T-cell (primary cell): ENCODE measurements at regions of chrX and their contacts with region 1.

Region 1: DNA sequence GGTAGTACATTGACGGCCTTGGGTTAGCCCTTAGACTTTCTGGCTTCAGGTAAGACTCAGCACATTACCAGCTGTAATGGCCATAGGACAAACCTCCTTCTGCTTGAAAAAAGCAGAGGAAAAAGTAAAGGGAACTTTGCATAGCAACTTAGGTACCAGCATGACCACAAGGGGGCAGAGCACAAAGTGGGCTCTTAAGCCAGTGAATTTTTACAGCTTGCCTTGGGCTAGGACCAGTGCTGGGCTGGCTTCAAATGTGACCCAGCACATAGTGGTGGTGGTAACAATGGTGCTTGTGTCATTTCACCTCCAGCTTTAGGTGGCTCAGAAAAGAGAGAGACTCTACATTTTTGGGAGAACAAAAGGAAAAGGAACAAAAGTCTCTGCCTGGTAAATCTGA is 66.1 kb downstream of the KLHL4 start:
- DNase-seq: peak in 1 of 35 experiments; percentile 1
- ATAC-seq: no peak
- H3K4me3 ChIP-seq: no peak overlapping the region
- H3K4me3 Mint-ChIP-seq: no peak overlapping the region
- H3K27ac ChIP-seq: no peak overlapping the region
- H3K27ac Mint-ChIP-seq: no peak overlapping the region
- H3K4me1 ChIP-seq: no peaks in the 10 kb centered on the region
- H3K4me1 Mint-ChIP-seq: no peaks in the 10 kb centered on the region
- H3K27me3 ChIP-seq: no peaks in the 10 kb centered on the region
- H3K27me3 Mint-ChIP-seq: no peaks in the 10 kb centered on the region

Region 2: GRCh38 chrX:87489071-87489470 is 94.6 kb before region 1 on chrX:
- CTCF ChIA-PET with region 1: no interaction called
- POLR2A ChIA-PET with region 1: no interaction called
- DNase-seq: no peak
- ATAC-seq: no peak
- H3K4me3 ChIP-seq: no peak overlapping the region
- H3K4me3 Mint-ChIP-seq: no peak overlapping the region
- H3K27ac ChIP-seq: no peak overlapping the region
- H3K27ac Mint-ChIP-seq: no peak overlapping the region
- H3K4me1 ChIP-seq: no peaks in the 10 kb centered on the region
- H3K4me1 Mint-ChIP-seq: no peaks in the 10 kb centered on the region
- H3K27me3 ChIP-seq: no peaks in the 10 kb centered on the region
- H3K27me3 Mint-ChIP-seq: peaks cover 0 to 3% of the 10 kb centered on the region in 2 donors

Region 3: GRCh38 chrX:87572911-87573310 is 10.8 kb before region 1 on chrX:
- CTCF ChIA-PET with region 1: no interaction called
- POLR2A ChIA-PET with region 1: interaction called in 1 of 2 experiments, 12 read pairs
- DNase-seq: no peak
- ATAC-seq: no peak
- H3K4me3 ChIP-seq: no peak overlapping the region
- H3K4me3 Mint-ChIP-seq: no peak overlapping the region
- H3K27ac ChIP-seq: no peak overlapping the region
- H3K27ac Mint-ChIP-seq: no peak overlapping the region
- H3K4me1 ChIP-seq: no peaks in the 10 kb centered on the region
- H3K4me1 Mint-ChIP-seq: no peaks in the 10 kb centered on the region
- H3K27me3 ChIP-seq: no peaks in the 10 kb centered on the region
- H3K27me3 Mint-ChIP-seq: peaks cover 0 to 5% of the 10 kb centered on the region in 2 donors

Region 4: DNA sequence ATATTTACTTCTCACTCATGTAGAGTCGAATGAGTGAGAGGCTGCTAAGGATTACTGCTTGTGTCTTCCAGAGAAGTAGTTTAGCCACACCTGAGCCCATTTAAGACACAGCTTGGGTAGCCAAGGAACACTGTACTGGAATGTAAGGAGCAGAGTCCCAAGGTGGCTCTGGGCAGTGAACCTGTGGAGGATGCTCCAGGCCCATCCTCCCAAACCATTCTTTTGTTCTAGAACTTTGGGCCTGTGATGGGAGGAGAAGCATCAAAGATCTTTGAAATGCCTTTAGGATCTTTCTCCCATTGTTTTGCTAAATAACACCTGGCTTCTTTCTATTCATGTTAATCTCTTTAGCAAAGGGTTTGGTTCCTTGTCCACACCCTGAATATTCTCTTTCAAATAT is 96.2 kb after region 1 on chrX:
- CTCF ChIA-PET with region 1: no interaction called
- POLR2A ChIA-PET with region 1: no interaction called
- DNase-seq: no peak
- ATAC-seq: no peak
- H3K4me3 ChIP-seq: no peak overlapping the region
- H3K4me3 Mint-ChIP-seq: no peak overlapping the region
- H3K27ac ChIP-seq: no peak overlapping the region
- H3K27ac Mint-ChIP-seq: no peak overlapping the region
- H3K4me1 ChIP-seq: no peaks in the 10 kb centered on the region
- H3K4me1 Mint-ChIP-seq: no peaks in the 10 kb centered on the region
- H3K27me3 ChIP-seq: no peaks in the 10 kb centered on the region
- H3K27me3 Mint-ChIP-seq: peaks cover 0 to 10% of the 10 kb centered on the region in 2 donors